ENCODE measurements at regions of chr4 and their contacts with region 1.

Region 1: DNA sequence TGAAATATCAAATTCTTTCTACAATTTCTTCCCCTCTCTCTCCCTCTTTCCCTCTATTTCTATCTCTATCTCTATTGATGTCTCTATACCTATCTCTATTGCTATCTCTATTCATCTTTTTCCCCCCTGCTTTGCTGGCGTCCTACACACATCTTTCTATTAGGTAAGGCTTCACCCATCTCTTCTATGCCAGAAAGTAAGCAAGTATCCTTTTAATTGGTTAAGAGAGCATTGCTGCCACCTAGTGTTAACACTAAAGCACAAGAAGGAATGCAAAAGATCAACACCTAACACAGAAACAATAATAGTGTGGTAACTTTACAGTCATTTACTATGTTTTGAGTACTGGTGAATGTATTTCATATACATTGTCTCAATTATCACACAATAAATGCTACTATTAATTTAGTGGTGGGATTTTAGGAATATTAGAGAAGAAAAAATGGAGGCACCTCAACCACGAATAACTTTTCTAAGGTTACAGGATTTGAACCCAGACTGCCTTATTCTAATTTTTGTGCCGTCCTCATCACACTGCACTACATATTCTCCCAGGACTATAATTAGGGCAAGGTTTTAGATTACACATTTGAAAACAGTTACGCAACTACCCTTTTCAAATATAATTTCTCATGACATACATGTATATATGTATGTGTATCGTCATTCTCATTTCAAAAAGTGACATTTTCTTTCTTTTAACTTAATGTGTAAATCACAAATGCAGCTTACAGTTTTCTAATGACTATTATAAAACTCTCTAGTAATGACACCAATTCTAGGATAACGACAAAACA is 3.7 kb upstream of the C4orf36 start:
- DNase-seq: no peak
- H3K4me3 Mint-ChIP-seq: no peak overlapping the region
- H3K27ac Mint-ChIP-seq: no peak overlapping the region
- H3K4me1 Mint-ChIP-seq: peaks cover 9% of the 10 kb centered on the region
- H3K27me3 Mint-ChIP-seq: peaks cover 17% of the 10 kb centered on the region

Region 2: GRCh38 chr4:86359944-86360478 is 535.9 kb before region 1 on chr4 and contains the start of gene MAPK10:
- intact Hi-C with region 1: loop called (anchors 10 kb)
- DNase-seq: peak; percentile 64
- H3K4me3 Mint-ChIP-seq: peak within 1 kb of the TSS; percentile 72
- H3K27ac Mint-ChIP-seq: peak within 1 kb of the TSS; percentile 70
- H3K4me1 Mint-ChIP-seq: peaks cover 12% of the 10 kb centered on the region
- H3K27me3 Mint-ChIP-seq: peaks cover 12% of the 10 kb centered on the region
- total RNA-seq, gene MAPK10: not detected in 2 replicates

Region 3: DNA sequence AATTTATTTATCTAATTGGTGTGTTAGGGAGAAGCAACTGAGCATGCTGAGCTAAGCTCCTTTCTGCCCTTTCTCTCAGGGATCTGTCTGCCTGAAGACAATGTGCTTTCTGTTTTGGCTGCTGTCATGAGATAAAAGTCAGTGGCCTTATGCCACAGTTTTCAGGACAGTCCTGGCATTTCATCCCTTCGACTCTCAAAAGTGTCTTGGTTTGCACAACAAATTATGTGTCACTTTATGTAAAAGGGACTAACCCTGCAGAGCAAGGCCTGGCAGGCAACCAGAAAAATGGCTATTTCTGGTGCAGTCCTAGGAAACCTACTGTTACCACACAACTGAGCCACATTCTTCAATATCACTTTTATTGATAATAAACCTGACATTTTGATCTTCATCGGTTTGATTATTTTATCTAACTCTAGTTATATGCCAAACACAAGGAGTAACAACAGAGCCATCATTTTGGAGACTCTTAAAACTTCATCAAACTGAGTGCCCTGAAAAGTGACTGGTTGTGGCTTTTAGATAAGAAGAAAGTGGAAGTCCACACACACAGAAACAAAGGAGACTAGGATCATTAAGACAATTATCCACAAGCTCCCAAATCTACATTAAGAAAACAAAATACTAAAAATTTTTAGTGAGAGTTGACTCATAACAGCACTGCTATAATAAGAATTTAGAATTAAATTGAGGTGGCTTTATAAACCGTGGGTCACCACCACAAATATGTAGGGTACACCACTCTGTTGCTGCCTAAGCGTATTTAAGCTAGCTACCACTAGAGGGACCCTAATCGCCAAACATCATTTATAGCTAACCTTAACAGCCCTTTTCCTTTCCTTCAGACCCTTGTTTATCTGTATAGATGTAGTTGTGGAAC is 397.7 kb before region 1 on chr4:
- intact Hi-C with region 1: loop called (anchors 1 kb)
- DNase-seq: no peak
- H3K4me3 Mint-ChIP-seq: no peak overlapping the region
- H3K27ac Mint-ChIP-seq: no peak overlapping the region
- H3K4me1 Mint-ChIP-seq: peaks cover 9% of the 10 kb centered on the region
- H3K27me3 Mint-ChIP-seq: peaks cover 13% of the 10 kb centered on the region

Region 4: DNA sequence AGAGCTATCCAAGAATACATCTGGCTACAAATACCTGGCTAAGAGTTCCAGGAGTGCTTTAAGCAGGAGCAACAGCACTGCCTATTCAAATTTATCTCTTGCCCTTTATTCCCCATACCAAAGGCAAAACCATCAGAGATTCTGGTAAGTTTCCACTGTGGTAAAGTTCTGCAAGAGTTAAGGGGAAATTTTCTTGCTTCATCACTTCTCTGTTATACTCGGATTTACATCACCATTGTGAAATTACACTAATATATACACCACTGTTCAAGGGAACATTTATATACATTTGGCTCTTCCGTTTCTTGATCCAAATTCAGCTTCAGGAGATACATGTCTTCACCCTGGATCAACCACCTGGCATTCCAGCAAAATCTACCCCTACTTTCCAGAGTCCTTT is 372.6 kb before region 1 on chr4:
- intact Hi-C with region 1: loop called (anchors 1 kb)
- DNase-seq: no peak
- H3K4me3 Mint-ChIP-seq: no peak overlapping the region
- H3K27ac Mint-ChIP-seq: no peak overlapping the region
- H3K4me1 Mint-ChIP-seq: no peaks in the 10 kb centered on the region
- H3K27me3 Mint-ChIP-seq: peaks cover 27% of the 10 kb centered on the region

Region 5: GRCh38 chr4:86653237-86653865 is 242.5 kb before region 1 on chr4:
- intact Hi-C with region 1: loop called (anchors 10 kb)
- DNase-seq: no peak
- H3K4me3 Mint-ChIP-seq: no peak overlapping the region
- H3K27ac Mint-ChIP-seq: no peak overlapping the region
- H3K4me1 Mint-ChIP-seq: no peaks in the 10 kb centered on the region
- H3K27me3 Mint-ChIP-seq: no peaks in the 10 kb centered on the region

Region 6: GRCh38 chr4:87068583-87069021 is 172.7 kb after region 1 on chr4:
- intact Hi-C with region 1: no loop called
- DNase-seq: no peak
- H3K4me3 Mint-ChIP-seq: no peak overlapping the region
- H3K27ac Mint-ChIP-seq: no peak overlapping the region
- H3K4me1 Mint-ChIP-seq: peaks cover 40% of the 10 kb centered on the region
- H3K27me3 Mint-ChIP-seq: no peaks in the 10 kb centered on the region

Measured in activated T-helper 2 cell treated with anti-CD3 and anti-CD28 coated beads, Interferon-gamma antibody, Interleukin-2, Interleukin-4, amounts not matched to agents 10 μg/mL and 5 μg/mL and 100 μg/mL, durations not matched to agents 14 hours and 24 hours and 36 hours (primary cell).